K562 (cell line): ENCODE measurements at regions of chr1 and their contacts with region 1.

Region 1: DNA sequence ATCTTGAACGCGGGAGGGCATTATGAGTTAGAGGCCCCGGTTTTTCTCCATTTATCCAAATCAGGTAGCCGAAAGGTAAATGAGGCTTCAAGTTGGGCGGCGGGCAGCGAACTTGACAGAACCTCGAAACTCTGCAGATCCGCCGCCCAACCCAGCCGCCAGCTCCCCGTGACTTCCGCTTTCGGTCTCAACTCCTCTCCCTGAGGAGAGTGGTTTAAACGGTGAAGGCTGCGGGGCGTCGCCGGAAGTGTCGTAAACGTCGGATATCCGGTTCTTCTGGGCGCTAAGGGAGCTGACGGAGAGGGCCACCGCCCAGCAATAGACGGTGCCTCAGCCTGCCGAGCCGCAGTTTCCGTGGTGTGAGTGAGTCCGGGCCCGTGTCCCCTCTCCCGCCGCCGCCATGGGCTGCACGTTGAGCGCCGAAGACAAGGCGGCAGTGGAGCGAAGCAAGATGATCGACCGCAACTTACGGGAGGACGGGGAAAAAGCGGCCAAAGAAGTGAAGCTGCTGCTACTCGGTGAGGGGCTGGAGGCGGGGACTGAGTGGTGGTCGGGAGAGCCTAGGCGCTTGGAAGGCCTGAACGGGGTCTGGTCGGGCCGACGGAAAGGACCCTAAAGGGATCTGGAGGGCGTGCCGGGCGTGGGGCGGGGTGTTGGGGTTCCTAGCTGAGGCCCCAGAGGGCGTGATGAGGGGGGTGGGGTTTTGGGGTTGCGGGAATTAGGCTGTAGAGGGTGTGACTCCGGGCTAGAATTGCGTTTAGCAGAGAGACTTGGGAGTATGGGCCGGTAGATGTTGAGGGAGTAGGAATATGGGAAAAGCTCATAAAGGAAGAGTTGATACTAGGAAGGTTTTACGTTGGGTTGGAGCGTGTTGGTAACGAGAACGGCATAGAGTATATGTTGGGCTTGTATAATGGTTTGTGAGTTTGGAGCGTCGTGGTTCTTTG is at the start of gene GNAI3:
- DNase-seq: peak; percentile 92 to 99 (median 94)
- ATAC-seq: peak; percentile 96
- H3K4me3 ChIP-seq: peak within 1 kb of the TSS; percentile 94
- H3K27ac ChIP-seq: peak within 1 kb of the TSS; percentile 91
- H3K4me1 ChIP-seq: peaks cover 4 to 5% of the 10 kb centered on the region in 2 experiments
- H3K27me3 ChIP-seq: no peaks in the 10 kb centered on the region
- CTCF ChIP-seq: no peak; a peak in 1 of 6 replicates
- EP300 ChIP-seq: no peak
- POLR2A ChIP-seq: peak; percentile 98
- RAD21 ChIP-seq: no peak; a peak in 2 of 4 replicates
- polyA plus RNA-seq, gene GNAI3: 6.9 to 8.0 TPM

Region 2: GRCh38 chr1:109589691-109590090 is 41.1 kb after region 1 on chr1:
- CTCF ChIA-PET with region 1: no interaction called
- POLR2A ChIA-PET with region 1: interaction called, 10 read pairs
- in situ Hi-C with region 1: no loop called
- intact Hi-C with region 1: no loop called
- DNase-seq: no peak
- ATAC-seq: no peak
- H3K4me3 ChIP-seq: no peak overlapping the region
- H3K27ac ChIP-seq: no peak overlapping the region
- H3K4me1 ChIP-seq: no peaks in the 10 kb centered on the region
- H3K27me3 ChIP-seq: no peaks in the 10 kb centered on the region
- CTCF ChIP-seq: no peak
- EP300 ChIP-seq: no peak
- POLR2A ChIP-seq: no peak
- RAD21 ChIP-seq: no peak

Region 3: GRCh38 chr1:109630081-109630897 is 81.7 kb after region 1 on chr1:
- CTCF ChIA-PET with region 1: interaction called, 24 read pairs
- POLR2A ChIA-PET with region 1: interaction called, 23 read pairs
- in situ Hi-C with region 1: no loop called
- intact Hi-C with region 1: loop called (anchors 1 kb)
- DNase-seq: peak; percentile 49 to 77 (median 76)
- ATAC-seq: peak; percentile 56
- H3K4me3 ChIP-seq: no peak overlapping the region
- H3K27ac ChIP-seq: no peak overlapping the region
- H3K4me1 ChIP-seq: peaks cover 0 to 39% of the 10 kb centered on the region in 2 experiments; a peak in 2 of 5 replicates
- H3K27me3 ChIP-seq: no peaks in the 10 kb centered on the region
- CTCF ChIP-seq: 0 out of 6 replicates have a peak, but pooled peaks of 1 of the 3 experiments have one; percentile 21
- EP300 ChIP-seq: no peak
- POLR2A ChIP-seq: no peak
- RAD21 ChIP-seq: no peak

Region 4: GRCh38 chr1:109649491-109649914 is 100.9 kb after region 1 on chr1:
- CTCF ChIA-PET with region 1: interaction called, 22 read pairs
- POLR2A ChIA-PET with region 1: interaction called, 10 read pairs
- in situ Hi-C with region 1: no loop called
- intact Hi-C with region 1: loop called (anchors 1 kb)
- DNase-seq: peak; percentile 37 to 53 (median 48)
- ATAC-seq: peak; percentile 87
- H3K4me3 ChIP-seq: peak overlapping the region; percentile 19; the same call in 1 of the 2 replicates
- H3K27ac ChIP-seq: no peak overlapping the region
- H3K4me1 ChIP-seq: peaks cover 4% of the 10 kb centered on the region in 2 experiments; a peak in 4 of 5 replicates
- H3K27me3 ChIP-seq: 0 out of 5 replicates have a peak, but pooled peaks cover 0 to 2% of the 10 kb centered on the region in 2 experiments
- CTCF ChIP-seq: peak; percentile 51 to 74 (median 52); a peak in 5 of 6 replicates
- EP300 ChIP-seq: no peak
- POLR2A ChIP-seq: no peak
- RAD21 ChIP-seq: peak; percentile 64 to 74

Region 5: DNA sequence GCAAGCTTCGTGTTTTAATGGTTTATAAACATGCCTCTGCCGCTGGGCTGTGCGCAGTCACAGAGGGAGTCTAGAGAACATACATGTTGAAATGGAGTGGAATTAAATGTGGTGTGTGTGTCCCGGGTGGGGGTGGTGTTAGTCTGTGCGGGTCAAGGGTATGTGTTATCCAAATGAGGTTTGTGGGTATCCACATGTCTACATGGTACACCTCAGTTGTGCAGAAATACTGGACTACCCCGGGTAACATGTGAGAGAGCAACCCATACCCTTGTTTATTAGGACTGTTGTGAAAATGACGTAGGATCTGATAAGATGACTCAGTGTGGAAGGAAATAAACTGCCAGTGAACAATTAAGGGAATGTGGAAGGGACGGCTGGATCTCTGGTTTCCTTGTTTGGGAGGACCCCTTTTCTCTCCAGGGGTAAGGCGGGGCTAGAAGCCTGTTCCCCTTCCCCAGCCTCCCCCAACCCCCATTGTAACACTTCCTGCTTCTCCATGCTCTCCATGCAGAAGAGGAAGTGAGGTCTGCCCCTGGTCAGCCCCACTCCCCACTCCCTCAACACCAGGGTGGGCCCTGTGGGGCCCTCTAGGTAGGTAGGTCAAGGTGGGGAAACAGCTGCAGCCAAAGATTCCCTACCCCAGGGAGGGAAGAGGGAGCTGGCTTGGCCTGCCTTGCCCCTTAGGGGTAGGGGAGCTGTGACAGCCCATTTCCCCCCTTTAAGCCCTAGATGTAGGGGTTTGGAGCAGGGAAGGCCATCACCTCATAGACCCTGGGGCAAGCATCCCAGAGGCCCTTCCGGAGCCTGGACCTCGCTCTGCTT is 214.4 kb after region 1 on chr1:
- CTCF ChIA-PET with region 1: interaction called, 3 read pairs
- POLR2A ChIA-PET with region 1: interaction called, 5 read pairs
- in situ Hi-C with region 1: loop called (anchors 5 kb)
- intact Hi-C with region 1: no loop called
- DNase-seq: peak; percentile 34 to 76 (median 64)
- ATAC-seq: peak; percentile 31
- H3K4me3 ChIP-seq: no peak overlapping the region
- H3K27ac ChIP-seq: peak overlapping the region; percentile 71; the same call in 2 of the 3 replicates
- H3K4me1 ChIP-seq: peaks cover 27 to 29% of the 10 kb centered on the region in 2 experiments
- H3K27me3 ChIP-seq: peaks cover 3 to 5% of the 10 kb centered on the region in 2 experiments; a peak in 3 of 5 replicates
- CTCF ChIP-seq: no peak
- EP300 ChIP-seq: peak; percentile 37; the same call in 1 of the 2 replicates
- POLR2A ChIP-seq: no peak
- RAD21 ChIP-seq: no peak